Breast epithelium (tissue), 4 donors: ENCODE measurements at regions of chr2 and their contacts with region 1.

Region 1: GRCh38 chr2:69597105-69597504 is 46.4 kb downstream of the AAK1 start:
- DNase-seq: no peak
- H3K4me3 ChIP-seq: no peak overlapping the region
- H3K27ac ChIP-seq: no peak overlapping the region
- H3K4me1 ChIP-seq: no peaks in the 10 kb centered on the region
- H3K27me3 ChIP-seq: no peaks in the 10 kb centered on the region
- CTCF ChIP-seq: no peak
- POLR2A ChIP-seq: no peak

Region 2: GRCh38 chr2:69100220-69100723 is 496.8 kb before region 1 on chr2:
- intact Hi-C with region 1: no loop called
- DNase-seq: no peak
- H3K4me3 ChIP-seq: no peak overlapping the region
- H3K27ac ChIP-seq: peak overlapping the region in 1 of 2 donors; percentile 4
- H3K4me1 ChIP-seq: no peaks in the 10 kb centered on the region
- H3K27me3 ChIP-seq: no peaks in the 10 kb centered on the region
- CTCF ChIP-seq: no peak
- POLR2A ChIP-seq: no peak

Region 3: DNA sequence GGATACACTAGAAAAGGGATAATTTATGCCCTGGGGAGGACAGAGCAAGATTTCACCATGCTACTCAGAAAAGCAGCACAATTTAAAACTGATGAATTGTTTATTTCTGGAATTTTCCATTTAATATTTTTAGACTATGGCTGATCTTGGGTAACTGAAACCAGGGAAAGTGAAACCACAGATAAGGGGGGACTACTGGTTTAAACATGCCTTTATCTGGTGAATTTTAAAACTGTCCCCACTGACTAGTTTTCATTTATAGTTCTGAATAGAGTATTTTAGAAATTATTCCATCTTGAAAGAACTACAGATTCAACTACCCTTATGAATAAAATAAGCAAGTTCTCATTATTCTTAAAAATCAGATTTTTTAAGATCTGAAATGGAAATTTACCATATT is 174.9 kb before region 1 on chr2:
- intact Hi-C with region 1: no loop called
- DNase-seq: no peak
- H3K4me3 ChIP-seq: no peak overlapping the region
- H3K27ac ChIP-seq: no peak overlapping the region
- H3K4me1 ChIP-seq: no peaks in the 10 kb centered on the region
- H3K27me3 ChIP-seq: no peaks in the 10 kb centered on the region
- CTCF ChIP-seq: no peak
- POLR2A ChIP-seq: no peak

Region 4: GRCh38 chr2:69436938-69437750 is 160.0 kb before region 1 on chr2 and contains the start of gene NFU1:
- intact Hi-C with region 1: loop called (anchors 5 kb)
- DNase-seq: peak; percentile 77 to 84
- H3K4me3 ChIP-seq: peak within 1 kb of the TSS; percentile 74 to 92 (median 79)
- H3K27ac ChIP-seq: peak within 1 kb of the TSS; percentile 96 to 98
- H3K4me1 ChIP-seq: no peaks in the 10 kb centered on the region
- H3K27me3 ChIP-seq: no peaks in the 10 kb centered on the region
- CTCF ChIP-seq: peak; percentile 61 to 71 (median 64)
- POLR2A ChIP-seq: peak; percentile 41
- total RNA-seq, gene NFU1: 46.1 to 69.9 (median 49.8) TPM